H1 (cell line): ENCODE measurements at regions of chr3 and their contacts with region 1.

Region 1: GRCh38 chr3:148643389-148643840 is 54.3 kb upstream of the AGTR1 start:
- DNase-seq: no peak
- H3K4me3 ChIP-seq: no peak overlapping the region
- H3K27ac ChIP-seq: no peak overlapping the region
- H3K4me1 ChIP-seq: peaks cover 0 to 4% (median 0%) of the 10 kb centered on the region in 4 experiments; a peak in 1 of 7 replicates
- H3K27me3 ChIP-seq: no peaks in the 10 kb centered on the region
- CTCF ChIP-seq: no peak
- EP300 ChIP-seq: no peak
- POLR2A ChIP-seq: no peak
- RAD21 ChIP-seq: no peak

Region 2: GRCh38 chr3:148631124-148631903 is 12.1 kb before region 1 on chr3:
- CTCF ChIA-PET with region 1: interaction called, 12 read pairs
- POLR2A ChIA-PET with region 1: no interaction called
- DNase-seq: no peak
- H3K4me3 ChIP-seq: no peak overlapping the region
- H3K27ac ChIP-seq: no peak overlapping the region
- H3K4me1 ChIP-seq: no peaks in the 10 kb centered on the region
- H3K27me3 ChIP-seq: no peaks in the 10 kb centered on the region
- CTCF ChIP-seq: peak in 2 of 3 experiments; percentile 69 to 89; a peak in 3 of 4 replicates
- EP300 ChIP-seq: no peak
- POLR2A ChIP-seq: no peak
- RAD21 ChIP-seq: peak; percentile 92 to 95